ENCODE measurements at regions of chr6 and their contacts with region 1.

Region 1: GRCh38 chr6:166402582-166403277 is 20.0 kb upstream of the MPC1 start:
- DNase-seq: no peak
- H3K4me3 Mint-ChIP-seq: no peak overlapping the region
- H3K27ac Mint-ChIP-seq: no peak overlapping the region
- H3K4me1 Mint-ChIP-seq: peaks cover 5% of the 10 kb centered on the region
- H3K27me3 Mint-ChIP-seq: peaks cover 14% of the 10 kb centered on the region

Region 2: GRCh38 chr6:166275714-166276166 is 127.0 kb before region 1 on chr6:
- CTCF ChIA-PET with region 1: interaction called, 23 read pairs
- DNase-seq: peak; percentile 81
- H3K4me3 Mint-ChIP-seq: no peak overlapping the region
- H3K27ac Mint-ChIP-seq: no peak overlapping the region
- H3K4me1 Mint-ChIP-seq: peaks cover 7% of the 10 kb centered on the region
- H3K27me3 Mint-ChIP-seq: peaks cover 36% of the 10 kb centered on the region

Region 3: DNA sequence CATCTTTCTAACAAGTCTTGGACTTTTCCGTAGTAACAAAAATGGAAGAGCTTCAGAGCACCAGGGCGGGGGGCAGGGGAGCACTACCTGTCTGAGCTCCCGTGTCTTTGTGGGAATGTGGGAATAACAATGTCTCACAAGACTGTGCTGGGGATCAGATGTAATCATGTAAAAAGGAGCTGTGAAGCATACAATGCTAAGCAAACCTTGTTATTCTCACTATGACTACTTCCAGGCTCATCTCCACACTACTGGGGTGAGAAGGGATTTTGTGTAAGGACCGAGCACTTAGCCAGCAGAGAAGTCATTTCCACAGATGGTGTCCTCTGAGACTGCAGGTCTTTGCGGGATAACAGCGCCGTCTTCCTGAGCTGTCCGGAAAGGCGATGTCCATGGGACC is 121.6 kb before region 1 on chr6:
- CTCF ChIA-PET with region 1: interaction called, 23 read pairs
- DNase-seq: no peak
- H3K4me3 Mint-ChIP-seq: no peak overlapping the region
- H3K27ac Mint-ChIP-seq: no peak overlapping the region
- H3K4me1 Mint-ChIP-seq: peaks cover under 1% of the 10 kb centered on the region
- H3K27me3 Mint-ChIP-seq: peaks cover 44% of the 10 kb centered on the region

Region 4: DNA sequence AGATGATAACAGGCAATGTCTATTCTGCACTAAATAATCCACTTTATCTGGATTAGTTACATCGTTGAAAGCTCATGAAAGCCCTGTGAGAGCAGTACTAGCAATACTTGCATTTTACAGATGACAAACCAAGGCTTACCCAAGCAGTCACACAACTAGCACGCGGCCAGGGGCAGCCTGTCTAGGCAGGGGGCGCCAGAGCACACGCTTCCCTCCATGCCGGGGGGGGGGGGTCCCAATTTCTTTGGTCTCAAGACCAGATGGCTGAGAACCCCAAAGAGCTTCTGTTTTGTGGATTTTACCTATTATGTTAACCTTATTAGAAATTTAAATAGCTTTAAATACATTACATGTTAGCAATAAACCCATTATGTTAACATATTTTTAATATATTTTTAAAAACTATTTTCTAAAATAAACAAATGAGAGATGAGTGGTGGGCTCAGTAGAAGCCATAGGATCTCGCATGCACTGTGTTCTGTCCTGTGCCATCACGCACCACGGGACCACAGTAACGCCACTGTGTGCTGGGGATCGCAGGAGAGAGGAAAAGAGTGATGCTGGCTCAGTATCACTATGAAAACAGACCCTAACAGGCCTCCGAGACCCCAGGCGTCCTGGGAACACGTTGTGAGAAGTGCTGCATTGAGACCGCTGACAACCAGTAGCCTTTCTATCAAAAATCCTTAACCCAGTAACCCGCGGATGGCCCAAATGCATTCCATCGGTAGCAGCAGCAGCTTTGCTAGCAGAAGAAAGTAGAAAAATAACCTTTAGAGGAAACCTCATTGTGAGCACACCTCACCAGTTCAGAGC is 89.3 kb before region 1 on chr6:
- CTCF ChIA-PET with region 1: interaction called, 27 read pairs
- DNase-seq: peak; percentile 64
- H3K4me3 Mint-ChIP-seq: no peak overlapping the region
- H3K27ac Mint-ChIP-seq: no peak overlapping the region
- H3K4me1 Mint-ChIP-seq: no peaks in the 10 kb centered on the region
- H3K27me3 Mint-ChIP-seq: peaks cover 39% of the 10 kb centered on the region

Region 5: GRCh38 chr6:166381733-166382499 is 20.8 kb before region 1 on chr6:
- CTCF ChIA-PET with region 1: interaction called, 30 read pairs
- DNase-seq: peak; percentile 79
- H3K4me3 Mint-ChIP-seq: peak overlapping the region; percentile 91
- H3K27ac Mint-ChIP-seq: peak overlapping the region; percentile 90
- H3K4me1 Mint-ChIP-seq: peaks cover 24% of the 10 kb centered on the region
- H3K27me3 Mint-ChIP-seq: no peaks in the 10 kb centered on the region

Measured in activated naive CD4-positive, alpha-beta T cell treated with anti-CD3 and anti-CD28 coated beads, Interleukin-2, amount 10 ng/mL, durations not matched to agents 7 days and 5 days (primary cell).